H1 (cell line): ENCODE measurements at regions of chr12 and their contacts with region 1.

Region 1: DNA sequence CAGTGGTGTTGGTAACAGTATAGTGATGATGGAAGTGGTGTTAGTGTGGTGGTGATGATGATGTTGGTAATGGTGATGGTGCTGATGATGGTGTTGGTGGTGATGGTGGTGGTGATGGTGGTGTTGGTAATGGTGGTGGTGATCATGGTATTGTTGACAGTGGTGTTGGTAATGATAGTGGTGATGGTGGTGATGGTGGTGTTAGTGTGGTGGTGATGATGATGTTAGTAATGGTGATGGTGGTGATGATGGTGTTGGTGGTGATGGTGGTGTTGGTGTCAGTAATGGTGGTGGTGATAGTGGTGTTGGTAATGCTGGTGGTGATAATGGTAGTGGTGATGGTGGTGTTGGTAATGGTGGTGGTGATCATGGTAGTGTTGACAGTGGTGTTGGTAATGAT is 7.4 kb downstream of the C1R start:
- DNase-seq: no peak
- H3K4me3 ChIP-seq: no peak overlapping the region
- H3K27ac ChIP-seq: no peak overlapping the region
- H3K4me1 ChIP-seq: peaks cover 0 to under 1% (median under 1%) of the 10 kb centered on the region in 4 experiments; a peak in 3 of 7 replicates
- H3K27me3 ChIP-seq: no peaks in the 10 kb centered on the region; a peak in 1 of 7 replicates
- CTCF ChIP-seq: no peak
- EP300 ChIP-seq: no peak
- POLR2A ChIP-seq: no peak
- RAD21 ChIP-seq: no peak

Region 2: DNA sequence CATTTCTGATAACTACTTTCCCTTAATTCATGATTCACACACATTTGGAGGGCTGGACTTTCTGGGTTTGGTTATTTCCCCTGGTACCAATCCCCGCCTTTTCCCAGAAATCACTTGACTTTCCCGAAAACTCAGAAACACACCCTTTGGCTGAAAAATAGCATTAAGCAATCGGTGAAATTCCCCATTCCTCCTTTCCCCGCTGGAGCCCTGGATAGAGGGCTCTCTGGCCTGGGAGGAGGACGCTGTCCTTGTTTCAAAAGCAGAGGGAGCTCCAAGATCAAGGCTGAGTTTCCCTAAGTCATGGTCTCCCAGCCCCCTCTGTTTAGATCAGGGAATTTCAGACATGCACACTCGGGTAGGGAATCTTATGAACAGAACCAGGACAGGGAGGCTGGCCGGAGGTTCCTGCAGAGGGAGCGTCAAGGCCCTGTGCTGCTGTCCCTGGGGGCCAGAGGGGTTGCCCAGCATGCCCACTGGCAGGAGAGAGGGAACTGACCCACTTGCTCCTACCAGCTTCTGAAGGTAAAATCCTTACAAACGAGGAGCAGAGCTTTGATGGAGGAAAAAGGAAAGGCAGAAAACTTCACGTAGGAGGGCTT is 24.4 kb before region 1 on chr12 and contains the start of gene C1S:
- CTCF ChIA-PET with region 1: interaction called, 13 read pairs
- POLR2A ChIA-PET with region 1: interaction called, 5 read pairs
- DNase-seq: peak; percentile 36 to 63
- H3K4me3 ChIP-seq: no peak within 1 kb of the TSS
- H3K27ac ChIP-seq: no peak within 1 kb of the TSS
- H3K4me1 ChIP-seq: peaks cover 0 to 5% (median 2%) of the 10 kb centered on the region in 4 experiments; a peak in 3 of 7 replicates
- H3K27me3 ChIP-seq: no peaks in the 10 kb centered on the region
- CTCF ChIP-seq: peak; percentile 49 to 96 (median 78)
- EP300 ChIP-seq: no peak
- POLR2A ChIP-seq: no peak
- RAD21 ChIP-seq: peak; percentile 91 to 94
- total RNA-seq, gene C1S: 5.0 and 7.3 TPM in 2 replicates